ENCODE measurements at regions of chr19 and their contacts with region 1.

Region 1: GRCh38 chr19:18112989-18113478 is 15.5 kb downstream of the MAST3 start:
- DNase-seq: no peak
- ATAC-seq: peak; percentile 76
- H3K4me3 ChIP-seq: no peak overlapping the region
- H3K27ac ChIP-seq: peak overlapping the region; percentile 48; the same call in 1 of the 2 replicates
- H3K4me1 ChIP-seq: peaks cover 29% of the 10 kb centered on the region
- H3K27me3 ChIP-seq: no peaks in the 10 kb centered on the region
- CTCF ChIP-seq: peak; percentile 88 to 93 (median 91)
- EP300 ChIP-seq: no peak
- POLR2A ChIP-seq: no peak
- RAD21 ChIP-seq: peak; percentile 84

Region 2: GRCh38 chr19:18063463-18063862 is 49.6 kb before region 1 on chr19:
- CTCF ChIA-PET with region 1: interaction called, 16 read pairs
- POLR2A ChIA-PET with region 1: no interaction called
- RAD21 ChIA-PET with region 1: interaction called, 9 read pairs
- SMC1A ChIA-PET with region 1: interaction called, 3 read pairs
- in situ Hi-C with region 1: no loop called
- intact Hi-C with region 1: no loop called
- DNase-seq: no peak
- ATAC-seq: peak; percentile 59
- H3K4me3 ChIP-seq: no peak overlapping the region
- H3K27ac ChIP-seq: no peak overlapping the region
- H3K4me1 ChIP-seq: no peaks in the 10 kb centered on the region
- H3K27me3 ChIP-seq: no peaks in the 10 kb centered on the region
- CTCF ChIP-seq: peak; percentile 59 to 67 (median 60)
- EP300 ChIP-seq: no peak
- POLR2A ChIP-seq: no peak
- RAD21 ChIP-seq: peak; percentile 74

Region 3: GRCh38 chr19:18097217-18097992 is 15.6 kb before region 1 on chr19 and contains the start of gene MAST3:
- CTCF ChIA-PET with region 1: interaction called, 23 read pairs
- POLR2A ChIA-PET with region 1: interaction called, 16 read pairs
- RAD21 ChIA-PET with region 1: interaction called, 5 read pairs
- SMC1A ChIA-PET with region 1: interaction called, 12 read pairs
- in situ Hi-C with region 1: no loop called
- intact Hi-C with region 1: no loop called
- DNase-seq: peak; percentile 64
- ATAC-seq: peak; percentile 85
- H3K4me3 ChIP-seq: peak within 1 kb of the TSS; percentile 96
- H3K27ac ChIP-seq: peak within 1 kb of the TSS; percentile 87
- H3K4me1 ChIP-seq: peaks cover 11% of the 10 kb centered on the region
- H3K27me3 ChIP-seq: no peaks in the 10 kb centered on the region
- CTCF ChIP-seq: no peak
- EP300 ChIP-seq: no peak
- POLR2A ChIP-seq: peak; percentile 78
- RAD21 ChIP-seq: no peak
- polyA plus RNA-seq, gene MAST3: 3.5 to 8.5 TPM

Region 4: GRCh38 chr19:18160971-18161635 is 48.1 kb after region 1 on chr19:
- CTCF ChIA-PET with region 1: interaction called, 22 read pairs
- POLR2A ChIA-PET with region 1: interaction called, 4 read pairs
- RAD21 ChIA-PET with region 1: interaction called, 3 read pairs
- SMC1A ChIA-PET with region 1: interaction called, 5 read pairs
- in situ Hi-C with region 1: no loop called
- intact Hi-C with region 1: no loop called
- DNase-seq: no peak
- ATAC-seq: peak; percentile 96
- H3K4me3 ChIP-seq: peak overlapping the region; percentile 70; the same call in 1 of the 2 replicates
- H3K27ac ChIP-seq: no peak overlapping the region; the same call in 1 of the 2 replicates
- H3K4me1 ChIP-seq: 0 out of 2 replicates have a peak, but pooled peaks cover 5% of the 10 kb centered on the region
- H3K27me3 ChIP-seq: no peaks in the 10 kb centered on the region
- CTCF ChIP-seq: peak; percentile 42 to 79 (median 55)
- EP300 ChIP-seq: no peak
- POLR2A ChIP-seq: peak; percentile 74; the same call in 1 of the 2 replicates
- RAD21 ChIP-seq: peak; percentile 48

Measured in GM12878 (cell line).